ENCODE measurements at regions of chr4 and their contacts with region 1.

Region 1: GRCh38 chr4:20787940-20788665 is 87.8 kb downstream of the PACRGL start:
- ATAC-seq: peak in 2 of 8 experiments; percentile 51 to 65
- H3K4me3 ChIP-seq: no peak overlapping the region
- H3K27ac ChIP-seq: no peak overlapping the region
- H3K4me1 ChIP-seq: peaks cover 0 to 9% of the 10 kb centered on the region in 2 donors

Region 2: DNA sequence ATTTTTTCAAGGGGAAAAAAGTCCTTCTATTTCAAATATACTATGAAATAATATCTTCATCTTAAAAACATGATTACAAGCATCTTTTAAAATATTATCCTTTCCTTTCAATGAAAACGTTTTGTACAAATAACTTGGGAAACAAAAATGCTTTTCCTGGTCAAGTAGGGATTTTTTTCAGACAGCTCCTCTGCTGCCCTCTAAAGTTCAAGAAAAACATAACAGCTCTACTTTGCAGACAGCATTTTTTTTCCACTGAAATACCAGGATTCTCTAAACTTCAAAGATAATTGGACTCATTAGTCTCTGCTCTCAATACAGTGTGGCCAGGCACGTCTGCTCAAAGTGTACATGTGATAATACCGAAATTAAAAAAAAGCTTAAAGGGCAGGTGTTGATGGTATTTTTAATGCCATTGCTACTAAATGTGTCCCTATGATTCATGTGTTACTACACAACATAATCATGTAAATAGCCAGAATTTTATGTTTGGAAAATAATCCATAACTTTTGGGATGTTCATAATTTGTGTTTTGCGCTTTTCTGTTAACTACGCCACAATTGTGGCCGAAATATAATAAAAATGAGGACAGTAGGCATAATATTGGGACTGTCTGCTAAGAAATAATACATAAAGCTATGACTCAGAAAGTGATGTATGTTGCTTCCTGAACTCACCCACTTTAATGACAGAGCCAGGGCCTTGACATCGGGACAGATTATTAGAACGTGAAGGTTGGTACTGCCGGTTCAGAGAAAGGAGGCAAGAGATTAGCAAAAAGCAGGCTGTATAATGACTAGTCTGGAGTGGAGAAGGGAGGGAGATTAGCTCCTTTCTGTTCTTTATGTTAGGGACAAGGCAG is 681.6 kb after region 1 on chr4:
- in situ Hi-C with region 1: loop called in 3 of 9 experiments (anchors 25 kb)
- ATAC-seq: peak in 5 of 8 experiments; percentile 58 to 81 (median 73)
- H3K4me3 ChIP-seq: no peak overlapping the region
- H3K27ac ChIP-seq: no peak overlapping the region
- H3K4me1 ChIP-seq: no peaks in the 10 kb centered on the region

Measured in motor neuron (in vitro differentiated cells).